Naive thymus-derived CD8-positive, alpha-beta T cell (primary cell): ENCODE measurements at regions of chr20 and their contacts with region 1.

Region 1: GRCh38 chr20:38962044-38962927 is at the start of gene DHX35:
- DNase-seq: peak; percentile 92 to 99 (median 98)
- ATAC-seq: peak; percentile 97 to 98
- H3K4me3 Mint-ChIP-seq: peak within 1 kb of the TSS; percentile 89 to 98 (median 96)
- H3K27ac Mint-ChIP-seq: peak within 1 kb of the TSS; percentile 89 to 98 (median 96)
- H3K4me1 Mint-ChIP-seq: peaks cover 19 to 43% (median 27%) of the 10 kb centered on the region in 4 donors
- H3K27me3 Mint-ChIP-seq: no peaks in the 10 kb centered on the region
- polyA plus RNA-seq, gene DHX35: 5.4 to 7.5 (median 5.6) TPM

Region 2: GRCh38 chr20:38926142-38926933 is 35.9 kb before region 1 on chr20 and contains the start of gene FAM83D:
- POLR2A ChIA-PET with region 1: interaction called, 17 read pairs
- DNase-seq: peak; percentile 83 to 93 (median 90)
- ATAC-seq: peak; percentile 95 to 96
- H3K4me3 Mint-ChIP-seq: peak within 1 kb of the TSS; percentile 73 to 85 (median 83)
- H3K27ac Mint-ChIP-seq: peak within 1 kb of the TSS; percentile 20 to 89 (median 71)
- H3K4me1 Mint-ChIP-seq: peaks cover 6 to 22% (median 15%) of the 10 kb centered on the region in 4 donors
- H3K27me3 Mint-ChIP-seq: no peaks in the 10 kb centered on the region
- polyA plus RNA-seq, gene FAM83D: 0.46 to 0.56 (median 0.49) TPM